PC-9 (cell line): ENCODE measurements at regions of chr4 and their contacts with region 1.

Region 1: GRCh38 chr4:26081795-26082498 is 167.9 kb downstream of the SMIM20 start:
- DNase-seq: no peak
- H3K4me3 ChIP-seq: no peak overlapping the region
- H3K27ac ChIP-seq: no peak overlapping the region
- H3K4me1 ChIP-seq: peaks cover 26% of the 10 kb centered on the region
- H3K27me3 ChIP-seq: no peaks in the 10 kb centered on the region
- CTCF ChIP-seq: peak; percentile 73

Region 2: GRCh38 chr4:26028793-26029567 is 53.0 kb before region 1 on chr4:
- CTCF ChIA-PET with region 1: no interaction called
- POLR2A ChIA-PET with region 1: no interaction called
- intact Hi-C with region 1: no loop called
- DNase-seq: peak in 1 of 2 experiments; percentile 24
- H3K4me3 ChIP-seq: no peak overlapping the region
- H3K27ac ChIP-seq: no peak overlapping the region
- H3K4me1 ChIP-seq: peaks cover 8% of the 10 kb centered on the region; the same call in 1 of the 2 replicates
- H3K27me3 ChIP-seq: no peaks in the 10 kb centered on the region
- CTCF ChIP-seq: peak; percentile 37; the same call in 1 of the 2 replicates

Region 3: GRCh38 chr4:26071688-26072087 is 10.3 kb before region 1 on chr4:
- CTCF ChIA-PET with region 1: no interaction called
- POLR2A ChIA-PET with region 1: interaction called, 12 read pairs
- intact Hi-C with region 1: no loop called
- DNase-seq: no peak
- H3K4me3 ChIP-seq: no peak overlapping the region
- H3K27ac ChIP-seq: no peak overlapping the region
- H3K4me1 ChIP-seq: 0 out of 2 replicates have a peak, but pooled peaks cover 3% of the 10 kb centered on the region
- H3K27me3 ChIP-seq: no peaks in the 10 kb centered on the region
- CTCF ChIP-seq: no peak

Region 4: GRCh38 chr4:26217961-26218676 is 136.2 kb after region 1 on chr4:
- CTCF ChIA-PET with region 1: no interaction called
- POLR2A ChIA-PET with region 1: no interaction called
- intact Hi-C with region 1: loop called (anchors 10 kb)
- DNase-seq: no peak
- H3K4me3 ChIP-seq: no peak overlapping the region
- H3K27ac ChIP-seq: no peak overlapping the region
- H3K4me1 ChIP-seq: peaks cover 48% of the 10 kb centered on the region
- H3K27me3 ChIP-seq: no peaks in the 10 kb centered on the region
- CTCF ChIP-seq: no peak

Region 5: DNA sequence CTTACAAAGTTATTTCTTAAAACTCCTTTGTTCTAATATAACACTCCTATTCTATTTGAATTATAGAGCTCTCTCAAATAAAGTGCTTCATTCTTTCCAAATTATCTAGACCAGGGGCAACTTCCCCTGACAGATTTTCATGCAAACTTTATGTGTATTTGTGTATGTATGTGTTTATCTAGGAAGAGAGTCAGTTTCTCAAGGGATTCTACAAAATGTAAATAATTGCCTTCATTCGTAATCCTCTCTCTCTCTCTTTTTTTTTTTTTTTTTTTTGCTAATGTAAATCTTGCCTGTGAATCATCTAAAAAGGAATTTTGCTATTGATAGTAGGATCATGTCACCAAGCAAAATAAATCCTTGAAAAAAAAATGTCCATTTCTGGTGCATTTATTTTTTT is 199.9 kb after region 1 on chr4:
- CTCF ChIA-PET with region 1: interaction called, 13 read pairs
- POLR2A ChIA-PET with region 1: no interaction called
- intact Hi-C with region 1: no loop called
- DNase-seq: peak in 1 of 2 experiments; percentile 50
- H3K4me3 ChIP-seq: no peak overlapping the region
- H3K27ac ChIP-seq: no peak overlapping the region
- H3K4me1 ChIP-seq: peaks cover 21% of the 10 kb centered on the region
- H3K27me3 ChIP-seq: no peaks in the 10 kb centered on the region
- CTCF ChIP-seq: no peak

Region 6: DNA sequence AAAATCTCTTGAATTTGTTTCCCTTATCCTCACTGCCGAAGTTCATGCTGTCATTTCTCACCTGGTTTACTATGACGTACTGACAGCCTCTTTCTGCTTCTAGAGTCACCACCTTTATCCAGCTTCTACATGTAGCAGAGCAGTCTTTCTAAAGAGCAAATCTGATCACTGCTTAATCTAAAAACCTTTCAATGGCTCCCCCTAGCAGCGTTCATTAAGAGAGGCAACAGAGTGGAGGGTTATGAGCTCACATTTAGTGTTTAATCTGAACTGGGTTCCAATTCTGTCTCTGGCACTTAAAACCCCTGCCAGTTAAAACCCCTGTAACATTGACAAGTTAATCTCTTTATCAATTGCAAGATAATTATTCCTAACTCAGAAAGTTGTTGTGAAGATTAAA is 243.2 kb after region 1 on chr4:
- CTCF ChIA-PET with region 1: interaction called, 16 read pairs
- POLR2A ChIA-PET with region 1: no interaction called
- intact Hi-C with region 1: loop called (anchors 1 kb)
- DNase-seq: no peak
- H3K4me3 ChIP-seq: no peak overlapping the region
- H3K27ac ChIP-seq: no peak overlapping the region
- H3K4me1 ChIP-seq: peaks cover 23% of the 10 kb centered on the region; the same call in 1 of the 2 replicates
- H3K27me3 ChIP-seq: no peaks in the 10 kb centered on the region
- CTCF ChIP-seq: peak; percentile 50; the same call in 1 of the 2 replicates